RWPE1 (cell line): ENCODE measurements at regions of chr4 and their contacts with region 1.

Region 1: GRCh38 chr4:68375667-68376559 is 26.0 kb upstream of the YTHDC1 start:
- DNase-seq: peak; percentile 76
- H3K27ac ChIP-seq: no peak overlapping the region
- CTCF ChIP-seq: peak; percentile 88

Region 2: GRCh38 chr4:68271851-68272756 is 103.8 kb before region 1 on chr4:
- CTCF ChIA-PET with region 1: interaction called, 12 read pairs
- POLR2A ChIA-PET with region 1: no interaction called
- DNase-seq: peak; percentile 55
- H3K27ac ChIP-seq: no peak overlapping the region
- CTCF ChIP-seq: peak; percentile 75

Region 3: GRCh38 chr4:68348577-68348976 is 27.3 kb before region 1 on chr4:
- CTCF ChIA-PET with region 1: interaction called, 17 read pairs
- POLR2A ChIA-PET with region 1: no interaction called
- DNase-seq: no peak
- H3K27ac ChIP-seq: no peak overlapping the region
- CTCF ChIP-seq: no peak